Gastrocnemius medialis (tissue), 4 donors: ENCODE measurements at regions of chr11 and their contacts with region 1.

Region 1: GRCh38 chr11:9506489-9507276 is 45.9 kb downstream of the ZNF143 start:
- DNase-seq: peak; percentile 37 to 54
- ATAC-seq: peak; percentile 70 to 90
- H3K4me3 ChIP-seq: no peak overlapping the region
- H3K27ac ChIP-seq: no peak overlapping the region
- H3K4me1 ChIP-seq: peaks cover 3 to 4% of the 10 kb centered on the region in 2 donors
- H3K27me3 ChIP-seq: no peaks in the 10 kb centered on the region
- CTCF ChIP-seq: peak; percentile 75 to 92 (median 79)
- POLR2A ChIP-seq: no peak

Region 2: DNA sequence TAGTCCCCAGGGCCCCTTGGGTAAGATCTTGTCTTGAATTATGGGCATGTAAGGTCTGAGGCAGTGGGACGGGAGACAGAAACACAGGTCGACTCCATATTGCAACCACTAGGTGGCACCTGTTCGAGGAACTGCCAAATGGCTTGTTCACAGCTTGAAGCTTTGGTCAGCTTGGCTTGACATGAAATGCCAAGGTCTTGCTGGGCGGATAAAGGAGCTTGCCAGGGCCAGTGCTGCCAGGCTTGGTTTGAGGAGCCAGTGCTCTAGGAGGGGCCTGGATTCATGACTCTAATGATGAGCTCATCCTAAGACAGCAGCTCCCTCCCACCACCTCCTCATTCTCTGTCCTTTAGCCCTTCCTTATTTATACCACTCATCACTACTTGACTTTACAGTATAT is 491.0 kb before region 1 on chr11:
- in situ Hi-C with region 1: no loop called
- intact Hi-C with region 1: loop called (anchors 1 kb)
- DNase-seq: peak; percentile 50 to 59
- ATAC-seq: peak; percentile 92 to 96
- H3K4me3 ChIP-seq: no peak overlapping the region
- H3K27ac ChIP-seq: no peak overlapping the region
- H3K4me1 ChIP-seq: peaks cover 0 to 16% of the 10 kb centered on the region in 2 donors
- H3K27me3 ChIP-seq: no peaks in the 10 kb centered on the region
- CTCF ChIP-seq: peak in 4 of 5 experiments; percentile 60 to 78 (median 72)
- POLR2A ChIP-seq: no peak

Region 3: DNA sequence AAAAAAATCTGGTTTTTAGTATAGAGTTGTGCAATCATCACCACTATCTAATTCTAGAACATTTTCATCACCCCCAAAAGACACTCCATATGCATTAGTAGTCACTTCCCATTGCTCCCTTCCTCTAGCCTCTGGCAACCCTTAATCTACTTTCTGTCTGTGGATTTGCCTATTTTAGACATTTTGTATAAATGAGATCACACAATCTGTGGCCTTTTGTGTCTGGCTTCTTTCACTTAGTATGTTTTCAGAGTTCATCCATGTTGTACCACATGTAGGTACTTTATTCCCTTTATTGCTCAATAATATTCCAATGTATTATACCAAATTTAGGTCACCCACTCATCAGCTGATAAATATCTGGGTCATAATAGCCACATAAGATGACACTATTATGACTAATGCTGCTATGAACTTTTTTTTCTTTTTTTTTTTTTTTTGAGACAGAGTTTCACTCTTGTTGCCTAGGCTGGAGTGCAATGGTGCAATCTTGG is 347.7 kb before region 1 on chr11:
- in situ Hi-C with region 1: loop called (anchors 25 kb)
- intact Hi-C with region 1: no loop called
- DNase-seq: no peak
- ATAC-seq: no peak
- H3K4me3 ChIP-seq: no peak overlapping the region
- H3K27ac ChIP-seq: no peak overlapping the region
- H3K4me1 ChIP-seq: no peaks in the 10 kb centered on the region
- H3K27me3 ChIP-seq: no peaks in the 10 kb centered on the region
- CTCF ChIP-seq: no peak
- POLR2A ChIP-seq: no peak

Region 4: DNA sequence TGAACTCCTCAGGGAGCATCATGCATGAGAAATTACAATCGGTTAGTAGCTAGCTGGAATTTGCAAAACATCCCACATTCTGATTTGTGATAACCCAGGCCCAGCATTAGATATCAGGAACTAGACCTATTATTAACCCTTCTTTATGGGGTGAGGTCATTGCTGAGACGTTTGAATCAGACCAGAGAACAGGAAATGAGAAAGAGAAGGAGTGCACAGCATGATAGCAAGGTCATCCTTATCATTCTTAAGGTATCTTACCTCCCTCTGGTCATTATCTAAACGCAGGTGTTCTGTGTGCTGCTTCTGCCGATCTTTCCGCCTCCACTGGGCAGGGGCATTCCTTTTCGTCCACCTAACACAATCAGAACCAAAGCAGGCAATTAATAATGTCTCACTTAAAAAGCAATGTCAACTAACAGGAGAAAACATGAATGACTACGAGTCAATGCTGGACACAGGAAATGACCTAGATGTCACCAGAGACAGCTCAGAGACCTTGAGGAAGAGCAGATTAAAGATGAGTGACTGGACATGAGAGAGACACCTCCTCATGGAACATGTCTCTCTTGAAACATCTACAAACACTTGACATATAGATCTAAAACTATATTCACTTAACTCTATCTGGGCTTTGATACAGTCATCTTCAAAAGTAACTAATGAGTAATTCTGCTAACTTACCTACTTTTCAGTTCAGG is 336.9 kb before region 1 on chr11:
- in situ Hi-C with region 1: loop called (anchors 25 kb)
- intact Hi-C with region 1: loop called (anchors 5 kb)
- DNase-seq: no peak
- ATAC-seq: no peak
- H3K4me3 ChIP-seq: no peak overlapping the region
- H3K27ac ChIP-seq: no peak overlapping the region
- H3K4me1 ChIP-seq: peaks cover 8 to 12% of the 10 kb centered on the region in 2 donors
- H3K27me3 ChIP-seq: no peaks in the 10 kb centered on the region
- CTCF ChIP-seq: no peak
- POLR2A ChIP-seq: no peak

Region 5: DNA sequence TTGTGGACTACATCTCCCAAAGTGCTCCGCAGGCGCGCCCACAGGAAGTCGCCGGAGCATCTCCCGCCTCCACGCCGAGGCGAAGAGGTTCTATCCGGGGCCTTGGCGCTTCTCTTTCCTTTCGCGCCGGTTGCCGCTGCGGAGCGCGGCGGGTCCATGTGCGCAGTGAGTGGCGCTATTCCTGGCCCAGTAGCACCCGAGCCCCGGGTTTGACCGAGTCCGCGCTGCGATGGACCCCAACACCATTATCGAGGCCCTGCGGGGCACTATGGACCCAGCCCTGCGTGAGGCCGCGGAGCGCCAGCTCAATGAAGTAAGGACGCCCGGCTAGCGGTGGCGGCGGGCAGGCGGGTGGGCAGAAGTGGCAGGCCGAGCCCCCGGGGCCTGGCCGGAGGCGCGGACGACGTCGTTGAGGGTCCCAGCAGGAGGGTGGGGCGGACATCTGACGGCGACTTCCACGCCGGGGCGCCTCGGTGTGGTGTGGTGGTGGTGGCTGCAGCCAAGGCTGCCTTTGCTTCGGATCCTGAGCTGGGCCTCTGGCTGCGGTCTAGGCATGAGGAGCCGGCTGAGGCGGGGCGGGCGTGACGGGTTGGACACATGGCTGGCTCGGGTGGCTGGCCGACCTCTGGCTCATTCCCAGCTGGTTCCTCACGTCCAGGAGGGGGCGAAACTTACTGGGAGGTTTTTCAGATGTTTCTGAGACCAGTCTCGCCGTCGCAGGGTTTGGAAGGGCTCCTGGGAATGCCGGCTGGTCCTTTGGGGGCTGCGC is 122.0 kb before region 1 on chr11 and contains the start of gene IPO7:
- in situ Hi-C with region 1: no loop called
- intact Hi-C with region 1: loop called (anchors 5 kb)
- DNase-seq: peak; percentile 90 to 92
- ATAC-seq: peak; percentile 94
- H3K4me3 ChIP-seq: peak within 1 kb of the TSS; percentile 82 to 96 (median 92)
- H3K27ac ChIP-seq: peak within 1 kb of the TSS; percentile 94 to 99 (median 96)
- H3K4me1 ChIP-seq: peaks cover 32 to 33% of the 10 kb centered on the region in 2 donors
- H3K27me3 ChIP-seq: no peaks in the 10 kb centered on the region
- CTCF ChIP-seq: peak in 2 of 5 experiments; percentile 21 to 26
- POLR2A ChIP-seq: peak; percentile 92 to 93
- total RNA-seq, gene IPO7: 167 to 286 (median 179) TPM

Region 6: DNA sequence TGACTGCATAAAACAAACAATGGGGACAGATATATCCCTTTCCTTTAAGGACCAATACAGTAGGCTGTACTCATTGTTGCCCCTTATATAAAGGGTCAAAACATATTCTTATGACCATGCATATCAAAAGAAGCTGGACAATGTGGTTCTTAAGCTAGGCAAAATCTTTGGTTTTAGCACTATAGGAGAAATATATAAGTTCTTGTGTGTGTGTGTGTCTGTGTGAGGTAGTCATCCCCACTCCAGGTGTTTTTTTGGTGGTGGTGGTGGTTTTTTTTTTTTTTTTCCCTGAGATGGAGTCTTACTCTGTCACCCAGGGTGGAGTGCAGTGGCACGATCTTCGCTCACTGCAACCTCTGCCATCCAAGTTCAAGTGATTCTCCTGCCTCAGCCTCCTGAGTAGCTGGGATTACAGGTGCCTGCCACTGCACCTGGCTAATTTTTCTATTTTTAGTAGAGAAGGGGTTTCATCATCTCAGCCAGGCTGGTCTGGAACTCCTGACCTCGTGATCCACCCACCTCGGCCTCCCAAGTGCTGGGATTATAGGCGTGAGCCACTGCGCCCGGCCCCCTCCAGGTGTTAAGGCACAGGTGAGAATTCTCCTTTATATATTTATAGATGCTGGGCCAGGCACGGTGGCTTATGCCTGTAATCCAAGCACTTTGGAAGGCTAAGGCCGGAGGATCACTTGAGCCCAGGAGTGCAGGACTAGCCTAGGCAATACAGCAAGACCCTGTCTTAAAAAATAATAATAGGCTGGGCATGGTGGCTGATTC is 57.9 kb before region 1 on chr11:
- in situ Hi-C with region 1: no loop called
- intact Hi-C with region 1: loop called (anchors 10 kb)
- DNase-seq: no peak
- ATAC-seq: no peak
- H3K4me3 ChIP-seq: no peak overlapping the region
- H3K27ac ChIP-seq: no peak overlapping the region
- H3K4me1 ChIP-seq: no peaks in the 10 kb centered on the region
- H3K27me3 ChIP-seq: no peaks in the 10 kb centered on the region
- CTCF ChIP-seq: no peak
- POLR2A ChIP-seq: no peak